Activated naive CD4-positive, alpha-beta T cell treated with anti-CD3 and anti-CD28 coated beads for 36 hours (primary cell): ENCODE measurements at regions of chr11 and their contacts with region 1.

Region 1: GRCh38 chr11:77637345-77638165 is at the start of gene CLNS1A:
- DNase-seq: peak; percentile 90
- H3K4me3 Mint-ChIP-seq: peak within 1 kb of the TSS; percentile 89
- H3K27ac Mint-ChIP-seq: peak within 1 kb of the TSS; percentile 92
- H3K4me1 Mint-ChIP-seq: peaks cover 35% of the 10 kb centered on the region
- H3K27me3 Mint-ChIP-seq: no peaks in the 10 kb centered on the region
- total RNA-seq, gene CLNS1A: 190 to 191 TPM

Region 2: DNA sequence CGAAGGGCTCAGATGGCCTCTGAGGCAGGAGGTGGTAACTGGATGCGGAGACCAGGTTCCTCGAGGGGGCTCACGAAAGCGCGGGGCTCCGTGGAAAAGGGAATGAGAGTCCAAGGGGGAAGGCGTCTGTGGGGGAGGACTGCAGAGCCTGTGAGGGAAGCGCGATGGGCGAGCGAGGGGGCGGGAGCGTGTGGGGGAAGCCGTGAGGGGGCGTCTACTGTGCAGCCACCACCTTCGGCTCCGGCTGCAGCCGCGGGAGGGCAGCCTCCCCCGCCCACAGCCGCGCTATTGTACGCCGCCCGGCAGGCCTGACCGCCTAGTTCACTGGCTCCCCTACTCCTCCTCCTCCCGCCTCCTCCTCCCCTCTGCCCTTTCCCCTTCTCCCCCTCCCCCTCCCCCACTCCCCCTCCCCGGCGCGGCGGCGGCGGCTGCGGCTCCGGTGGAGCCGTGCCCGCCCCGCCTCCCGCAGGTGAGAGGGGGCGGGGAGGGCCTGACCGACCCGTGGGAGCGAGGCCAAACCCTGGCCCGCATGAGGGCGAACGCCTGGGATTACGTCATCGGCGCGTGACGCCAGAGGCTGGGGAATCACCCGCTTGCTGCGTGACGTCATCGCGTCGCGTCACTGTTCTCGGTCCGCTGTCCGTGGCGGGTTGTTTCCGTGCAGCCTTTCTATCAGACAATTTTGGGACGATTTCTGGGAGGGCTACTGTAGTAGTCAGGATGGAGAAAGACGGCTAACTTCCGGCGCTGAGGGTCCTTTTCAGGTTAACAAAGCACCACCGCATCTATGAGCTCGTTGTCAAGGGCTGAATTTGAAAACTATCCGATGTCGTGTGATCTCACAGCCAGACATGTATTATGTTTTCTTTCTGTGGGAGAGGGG is 163.5 kb before region 1 on chr11 and contains the start of gene PAK1:
- CTCF ChIA-PET with region 1: no interaction called
- intact Hi-C with region 1: loop called (anchors 2 kb)
- DNase-seq: peak; percentile 92
- H3K4me3 Mint-ChIP-seq: peak within 1 kb of the TSS; percentile 80
- H3K27ac Mint-ChIP-seq: peak within 1 kb of the TSS; percentile 74
- H3K4me1 Mint-ChIP-seq: peaks cover 13% of the 10 kb centered on the region
- H3K27me3 Mint-ChIP-seq: peaks cover 9% of the 10 kb centered on the region
- total RNA-seq, gene PAK1: 45.8 to 49.5 TPM

Region 3: GRCh38 chr11:77589521-77590193 is 47.9 kb before region 1 on chr11 and contains the start of gene AQP11:
- CTCF ChIA-PET with region 1: no interaction called
- intact Hi-C with region 1: loop called (anchors 1 kb)
- DNase-seq: peak; percentile 59
- H3K4me3 Mint-ChIP-seq: peak within 1 kb of the TSS; percentile 84
- H3K27ac Mint-ChIP-seq: no peak within 1 kb of the TSS
- H3K4me1 Mint-ChIP-seq: peaks cover 12% of the 10 kb centered on the region
- H3K27me3 Mint-ChIP-seq: no peaks in the 10 kb centered on the region
- total RNA-seq, gene AQP11: 0.24 to 0.49 TPM

Region 4: GRCh38 chr11:77609234-77609633 is 28.3 kb before region 1 on chr11:
- CTCF ChIA-PET with region 1: no interaction called
- intact Hi-C with region 1: no loop called
- DNase-seq: no peak
- H3K4me3 Mint-ChIP-seq: no peak overlapping the region
- H3K27ac Mint-ChIP-seq: no peak overlapping the region
- H3K4me1 Mint-ChIP-seq: no peaks in the 10 kb centered on the region
- H3K27me3 Mint-ChIP-seq: no peaks in the 10 kb centered on the region

Region 5: GRCh38 chr11:77619576-77620198 is 17.9 kb before region 1 on chr11:
- CTCF ChIA-PET with region 1: interaction called, 11 read pairs
- intact Hi-C with region 1: no loop called
- DNase-seq: no peak
- H3K4me3 Mint-ChIP-seq: no peak overlapping the region
- H3K27ac Mint-ChIP-seq: no peak overlapping the region
- H3K4me1 Mint-ChIP-seq: no peaks in the 10 kb centered on the region
- H3K27me3 Mint-ChIP-seq: no peaks in the 10 kb centered on the region

Region 6: DNA sequence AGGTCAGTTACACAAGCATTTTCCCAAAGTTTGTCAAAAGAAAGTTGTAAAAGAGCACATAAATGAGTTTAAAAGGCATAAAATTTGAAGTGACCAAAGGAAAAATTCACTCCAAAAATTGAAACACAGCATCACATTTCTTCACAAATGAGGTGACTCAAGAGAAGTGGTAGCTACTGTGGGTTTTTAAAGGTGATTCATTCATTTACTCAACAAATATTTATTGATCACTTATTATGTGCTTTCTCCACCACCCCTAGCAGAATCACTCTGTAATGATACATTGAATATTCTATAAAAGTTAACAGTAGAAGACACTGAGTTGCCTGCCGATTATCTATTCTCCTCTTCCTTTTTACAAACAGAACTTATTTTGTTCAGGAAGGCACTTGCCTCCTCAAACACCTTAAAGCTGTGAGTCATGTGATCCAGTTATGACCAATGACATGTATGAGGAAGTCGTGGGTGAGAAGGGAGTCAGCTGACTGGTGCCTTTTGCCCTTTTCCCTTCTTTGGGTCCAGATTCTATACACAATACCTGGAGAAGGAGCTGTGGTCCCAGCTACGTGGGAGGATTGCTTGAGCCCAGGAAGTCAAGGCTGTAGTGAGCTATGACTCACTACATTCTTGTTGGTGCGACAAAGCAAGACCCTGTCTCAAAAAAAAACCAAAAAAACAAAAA is 67.8 kb after region 1 on chr11:
- CTCF ChIA-PET with region 1: no interaction called
- intact Hi-C with region 1: loop called (anchors 5 kb)
- DNase-seq: peak; percentile 31
- H3K4me3 Mint-ChIP-seq: no peak overlapping the region
- H3K27ac Mint-ChIP-seq: no peak overlapping the region
- H3K4me1 Mint-ChIP-seq: peaks cover 21% of the 10 kb centered on the region
- H3K27me3 Mint-ChIP-seq: no peaks in the 10 kb centered on the region

Region 7: DNA sequence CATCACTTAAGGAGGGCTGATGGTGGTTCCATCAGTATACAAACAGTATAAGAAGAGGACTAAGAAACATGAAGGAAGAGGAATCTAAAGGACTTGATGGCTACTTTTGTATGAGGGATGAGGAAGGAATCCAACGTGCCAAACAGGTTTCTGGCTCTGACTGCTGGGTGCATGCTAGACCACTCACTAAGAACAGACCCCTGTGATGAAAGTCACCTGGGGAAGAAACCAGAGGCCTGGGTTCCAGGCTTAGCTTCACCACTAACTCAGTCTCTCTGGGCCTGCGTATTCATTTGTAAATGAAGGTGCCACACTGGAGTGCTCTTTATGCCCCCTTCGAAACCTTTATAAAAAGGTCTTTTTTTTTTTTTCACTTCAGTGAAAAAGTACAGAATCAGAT is 238.5 kb after region 1 on chr11:
- CTCF ChIA-PET with region 1: no interaction called
- intact Hi-C with region 1: no loop called
- DNase-seq: no peak
- H3K4me3 Mint-ChIP-seq: no peak overlapping the region
- H3K27ac Mint-ChIP-seq: no peak overlapping the region
- H3K4me1 Mint-ChIP-seq: no peaks in the 10 kb centered on the region
- H3K27me3 Mint-ChIP-seq: no peaks in the 10 kb centered on the region

Region 8: DNA sequence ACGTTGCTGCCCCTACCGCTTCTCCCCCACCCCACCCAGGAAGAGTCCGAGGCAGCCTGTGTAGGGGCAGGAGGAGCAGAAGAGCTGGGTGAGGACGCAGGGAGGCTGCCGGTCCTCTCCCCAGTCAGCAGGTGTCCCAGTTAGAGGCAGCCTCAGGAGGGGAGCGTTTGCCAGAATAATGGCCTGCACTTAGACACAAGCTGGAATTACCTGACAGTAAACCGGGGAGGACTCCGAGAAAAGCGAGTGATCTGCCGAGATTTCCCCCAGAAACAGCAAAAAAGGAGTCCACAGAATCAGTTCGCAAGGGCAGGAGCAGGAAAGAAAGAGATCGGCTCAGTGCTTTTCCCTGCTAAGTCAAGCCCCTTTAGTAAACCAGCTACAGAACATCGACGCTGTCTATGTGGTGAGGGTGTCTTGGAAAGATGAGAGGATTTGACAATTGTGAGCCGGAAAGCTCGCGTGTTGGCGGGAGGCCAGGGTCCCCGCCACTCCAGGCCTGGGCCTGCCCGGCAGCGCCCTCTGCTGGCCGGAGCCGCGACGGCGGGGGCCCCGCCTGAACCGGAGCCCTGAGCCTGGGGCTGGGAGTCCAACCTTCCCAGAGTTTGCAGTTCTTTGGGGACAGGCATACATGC is 408.4 kb after region 1 on chr11:
- CTCF ChIA-PET with region 1: no interaction called
- intact Hi-C with region 1: loop called (anchors 1 kb)
- DNase-seq: peak; percentile 78
- H3K4me3 Mint-ChIP-seq: peak overlapping the region; percentile 39
- H3K27ac Mint-ChIP-seq: no peak overlapping the region
- H3K4me1 Mint-ChIP-seq: peaks cover 9% of the 10 kb centered on the region
- H3K27me3 Mint-ChIP-seq: no peaks in the 10 kb centered on the region

Region 9: DNA sequence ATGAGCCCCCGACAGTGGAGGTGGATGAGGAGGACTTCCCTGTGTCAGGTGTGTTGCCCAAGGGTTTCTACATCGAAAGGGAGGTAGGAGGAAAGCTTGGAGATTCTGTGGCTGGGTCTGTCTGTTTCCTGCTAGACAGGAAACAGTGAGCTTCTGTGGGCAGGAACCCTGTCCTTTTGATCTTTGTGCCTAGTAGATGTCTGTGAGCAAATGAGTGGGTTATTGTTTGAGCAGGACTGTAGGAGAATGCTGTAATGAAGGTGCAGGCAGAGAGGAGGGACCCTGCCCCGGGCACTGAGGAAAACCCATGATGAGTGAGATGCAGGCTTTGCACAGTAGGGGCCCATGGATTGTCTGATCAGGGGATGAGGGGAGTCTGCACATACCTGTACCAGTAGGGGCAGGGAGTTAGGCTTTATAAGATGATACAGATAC is 565.2 kb after region 1 on chr11:
- CTCF ChIA-PET with region 1: no interaction called
- intact Hi-C with region 1: loop called (anchors 5 kb)
- DNase-seq: peak; percentile 73
- H3K4me3 Mint-ChIP-seq: peak overlapping the region; percentile 59
- H3K27ac Mint-ChIP-seq: peak overlapping the region; percentile 95
- H3K4me1 Mint-ChIP-seq: peaks cover 43% of the 10 kb centered on the region
- H3K27me3 Mint-ChIP-seq: no peaks in the 10 kb centered on the region